Breast epithelium (tissue), 4 donors: ENCODE measurements at regions of chr11 and their contacts with region 1.

Region 1: DNA sequence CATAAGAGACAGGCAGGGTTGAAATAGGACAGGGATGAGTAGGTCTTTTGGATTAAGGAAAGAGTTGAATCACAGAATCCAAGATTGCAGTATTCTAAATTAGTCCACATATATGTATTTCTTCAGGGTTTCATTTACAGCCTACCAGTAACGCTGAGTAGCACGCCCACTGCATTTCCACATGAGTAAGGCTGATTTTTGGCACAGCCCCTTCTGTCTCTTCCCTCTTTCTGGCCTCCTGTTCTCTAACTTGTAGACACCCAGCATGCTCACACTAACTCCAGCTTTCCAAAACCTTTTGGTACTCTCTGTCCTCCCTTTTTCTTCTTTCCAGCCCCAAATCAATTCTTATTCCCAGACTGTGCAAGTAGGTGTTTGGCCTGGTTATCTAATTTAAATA is 3.7 kb upstream of the SIK2 start:
- DNase-seq: no peak
- H3K4me3 ChIP-seq: no peak overlapping the region
- H3K27ac ChIP-seq: no peak overlapping the region
- H3K4me1 ChIP-seq: no peaks in the 10 kb centered on the region
- H3K27me3 ChIP-seq: no peaks in the 10 kb centered on the region
- CTCF ChIP-seq: no peak
- POLR2A ChIP-seq: no peak

Region 2: DNA sequence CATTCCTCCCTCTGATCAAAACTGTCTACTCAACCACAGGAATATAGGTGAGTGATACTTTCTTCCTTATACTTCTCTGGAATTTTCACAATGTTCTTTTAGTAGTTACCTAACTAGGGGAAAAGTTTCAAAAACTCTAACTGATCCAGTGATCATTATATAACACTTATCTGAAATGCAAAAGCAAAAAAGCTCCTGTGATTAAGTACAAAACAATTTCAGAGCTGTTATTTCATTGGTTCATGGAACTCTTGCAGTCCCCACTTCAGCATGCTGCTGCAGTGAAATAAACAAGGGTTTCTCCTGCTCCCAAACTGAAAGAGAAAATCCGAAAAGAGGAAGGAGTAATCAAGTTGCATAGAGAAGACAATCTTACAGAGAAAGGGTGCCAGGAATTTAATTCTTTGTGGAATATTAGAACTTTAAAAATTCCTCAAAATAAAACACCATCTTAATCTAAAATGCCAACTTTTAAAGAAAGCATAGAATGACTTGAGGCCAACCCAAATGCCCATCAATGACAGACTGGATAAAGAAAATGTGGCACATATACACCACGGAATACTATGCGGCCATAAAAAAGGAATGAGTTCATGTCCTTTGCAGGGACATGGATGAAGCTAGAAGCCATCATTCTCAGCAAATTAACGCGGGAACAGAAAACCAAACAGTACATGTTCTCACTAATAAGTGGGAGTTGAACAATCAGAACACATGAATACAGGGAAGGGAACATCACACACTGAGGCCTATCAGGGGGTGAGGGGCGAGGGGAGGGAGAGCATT is 147.4 kb after region 1 on chr11:
- intact Hi-C with region 1: no loop called
- DNase-seq: no peak
- H3K4me3 ChIP-seq: no peak overlapping the region
- H3K27ac ChIP-seq: peak overlapping the region; percentile 10 to 54
- H3K4me1 ChIP-seq: no peaks in the 10 kb centered on the region
- H3K27me3 ChIP-seq: no peaks in the 10 kb centered on the region
- CTCF ChIP-seq: no peak
- POLR2A ChIP-seq: no peak

Region 3: DNA sequence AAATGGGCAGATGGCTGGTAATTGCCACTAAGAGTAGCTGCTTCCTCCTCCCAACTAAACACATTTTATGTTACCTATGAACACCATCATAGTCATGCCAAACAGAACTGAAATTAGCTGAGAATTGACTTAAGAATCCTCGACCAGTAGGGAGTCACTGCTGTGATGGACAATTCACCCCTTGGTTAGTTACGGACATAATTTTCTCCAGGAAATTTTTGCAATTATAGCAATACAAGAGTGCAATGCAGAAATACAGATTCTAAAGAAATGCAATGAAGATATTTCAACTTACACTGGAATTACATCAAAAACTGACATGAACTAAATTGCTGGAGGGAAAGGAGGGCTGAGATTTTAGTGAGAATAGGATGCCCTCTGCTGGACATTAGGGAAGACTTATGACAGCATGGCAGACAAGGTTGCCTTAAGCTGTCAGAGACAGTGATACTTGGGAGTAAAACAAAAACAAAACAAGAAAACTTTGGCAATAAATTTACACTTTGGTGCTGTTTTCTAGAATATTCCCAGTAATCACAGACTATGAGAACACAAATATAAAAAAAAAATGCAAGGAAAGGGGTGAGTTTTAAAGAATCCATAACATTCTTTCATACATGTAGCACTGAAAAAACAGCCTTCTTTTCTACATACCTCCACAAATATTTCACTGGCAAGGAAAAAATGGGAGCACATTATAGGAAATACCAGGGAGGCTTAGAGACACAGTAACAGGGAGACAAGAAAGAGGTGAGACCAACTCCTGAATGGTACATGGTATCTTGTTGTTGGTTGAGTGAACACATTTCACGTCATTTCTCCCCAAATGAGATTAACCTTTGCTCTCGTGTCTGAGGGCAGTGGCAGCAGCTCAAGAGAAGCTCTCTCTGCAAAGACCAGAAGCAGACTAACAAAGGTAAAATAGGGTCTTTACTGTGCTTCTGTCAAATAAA is 178.8 kb after region 1 on chr11:
- intact Hi-C with region 1: loop called (anchors 10 kb)
- DNase-seq: no peak
- H3K4me3 ChIP-seq: no peak overlapping the region
- H3K27ac ChIP-seq: no peak overlapping the region
- H3K4me1 ChIP-seq: no peaks in the 10 kb centered on the region
- H3K27me3 ChIP-seq: no peaks in the 10 kb centered on the region
- CTCF ChIP-seq: peak; percentile 73 to 89 (median 84)
- POLR2A ChIP-seq: no peak

Region 4: GRCh38 chr11:111808063-111808588 is 209.6 kb after region 1 on chr11:
- intact Hi-C with region 1: no loop called
- DNase-seq: no peak
- H3K4me3 ChIP-seq: no peak overlapping the region
- H3K27ac ChIP-seq: no peak overlapping the region
- H3K4me1 ChIP-seq: no peaks in the 10 kb centered on the region
- H3K27me3 ChIP-seq: no peaks in the 10 kb centered on the region
- CTCF ChIP-seq: no peak
- POLR2A ChIP-seq: no peak